H1 (cell line): ENCODE measurements at regions of chr9 and their contacts with region 1.

Region 1: DNA sequence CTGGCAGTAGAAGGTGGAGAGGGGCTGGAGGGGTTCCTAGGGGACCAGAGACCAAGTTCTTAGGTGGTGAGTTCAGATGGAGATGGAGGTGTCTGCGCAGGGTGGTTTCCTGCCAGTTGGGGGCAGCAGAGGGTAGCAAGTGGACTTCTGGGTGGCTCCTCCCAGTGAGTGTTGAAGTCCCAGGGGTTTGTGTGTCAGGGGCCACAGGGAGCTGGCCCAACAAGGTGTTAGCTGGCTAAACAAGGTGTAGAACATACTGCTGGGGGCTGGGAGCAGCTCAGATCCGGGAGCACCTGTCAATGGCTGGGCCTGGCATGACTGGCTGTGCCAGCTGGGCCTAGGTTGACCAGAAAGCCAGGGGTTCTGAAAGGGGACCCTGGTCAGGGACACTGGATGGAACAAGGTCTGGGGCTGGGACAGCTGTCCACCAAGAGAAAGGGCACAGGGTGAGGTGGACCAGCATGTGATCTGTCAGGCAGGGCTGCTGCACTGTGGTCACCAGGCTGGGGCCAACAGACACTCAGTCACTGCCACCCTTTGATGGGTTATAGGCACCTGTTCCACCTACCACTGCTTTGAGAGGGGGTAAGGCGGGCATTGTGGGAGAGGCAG is 35.6 kb downstream of the DAB2IP start:
- DNase-seq: peak in 1 of 2 experiments; percentile 94
- H3K4me3 ChIP-seq: no peak overlapping the region
- H3K27ac ChIP-seq: no peak overlapping the region
- H3K4me1 ChIP-seq: peaks cover 2 to 6% (median 4%) of the 10 kb centered on the region in 4 experiments
- H3K27me3 ChIP-seq: no peaks in the 10 kb centered on the region; a peak in 1 of 7 replicates
- CTCF ChIP-seq: peak; percentile 89 to 95 (median 90)
- EP300 ChIP-seq: no peak
- POLR2A ChIP-seq: no peak
- RAD21 ChIP-seq: peak; percentile 87 to 90

Region 2: GRCh38 chr9:121609845-121610570 is 77.0 kb before region 1 on chr9:
- CTCF ChIA-PET with region 1: interaction called, 11 read pairs
- POLR2A ChIA-PET with region 1: no interaction called
- DNase-seq: no peak
- H3K4me3 ChIP-seq: no peak overlapping the region
- H3K27ac ChIP-seq: no peak overlapping the region
- H3K4me1 ChIP-seq: peaks cover 0 to 10% (median 5%) of the 10 kb centered on the region in 4 experiments; a peak in 5 of 7 replicates
- H3K27me3 ChIP-seq: no peaks in the 10 kb centered on the region
- CTCF ChIP-seq: no peak
- EP300 ChIP-seq: no peak
- POLR2A ChIP-seq: no peak
- RAD21 ChIP-seq: no peak

Region 3: GRCh38 chr9:121658166-121658565 is 28.9 kb before region 1 on chr9:
- CTCF ChIA-PET with region 1: interaction called, 56 read pairs
- POLR2A ChIA-PET with region 1: no interaction called
- DNase-seq: no peak
- H3K4me3 ChIP-seq: no peak overlapping the region
- H3K27ac ChIP-seq: no peak overlapping the region
- H3K4me1 ChIP-seq: peaks cover 0 to 15% (median 7%) of the 10 kb centered on the region in 4 experiments; a peak in 6 of 7 replicates
- H3K27me3 ChIP-seq: no peaks in the 10 kb centered on the region
- CTCF ChIP-seq: no peak
- EP300 ChIP-seq: no peak
- POLR2A ChIP-seq: no peak
- RAD21 ChIP-seq: no peak

Region 4: GRCh38 chr9:121698627-121699570 is 11.9 kb after region 1 on chr9:
- CTCF ChIA-PET with region 1: interaction called, 231 read pairs
- POLR2A ChIA-PET with region 1: interaction called, 3 read pairs
- DNase-seq: peak in 1 of 2 experiments; percentile 86
- H3K4me3 ChIP-seq: peak overlapping the region; percentile 54 to 68 (median 61)
- H3K27ac ChIP-seq: no peak overlapping the region
- H3K4me1 ChIP-seq: peaks cover 4 to 13% (median 12%) of the 10 kb centered on the region in 4 experiments
- H3K27me3 ChIP-seq: peaks cover 0 to 5% (median 0%) of the 10 kb centered on the region in 4 experiments; a peak in 4 of 7 replicates
- CTCF ChIP-seq: no peak
- EP300 ChIP-seq: no peak
- POLR2A ChIP-seq: no peak
- RAD21 ChIP-seq: no peak

Region 5: DNA sequence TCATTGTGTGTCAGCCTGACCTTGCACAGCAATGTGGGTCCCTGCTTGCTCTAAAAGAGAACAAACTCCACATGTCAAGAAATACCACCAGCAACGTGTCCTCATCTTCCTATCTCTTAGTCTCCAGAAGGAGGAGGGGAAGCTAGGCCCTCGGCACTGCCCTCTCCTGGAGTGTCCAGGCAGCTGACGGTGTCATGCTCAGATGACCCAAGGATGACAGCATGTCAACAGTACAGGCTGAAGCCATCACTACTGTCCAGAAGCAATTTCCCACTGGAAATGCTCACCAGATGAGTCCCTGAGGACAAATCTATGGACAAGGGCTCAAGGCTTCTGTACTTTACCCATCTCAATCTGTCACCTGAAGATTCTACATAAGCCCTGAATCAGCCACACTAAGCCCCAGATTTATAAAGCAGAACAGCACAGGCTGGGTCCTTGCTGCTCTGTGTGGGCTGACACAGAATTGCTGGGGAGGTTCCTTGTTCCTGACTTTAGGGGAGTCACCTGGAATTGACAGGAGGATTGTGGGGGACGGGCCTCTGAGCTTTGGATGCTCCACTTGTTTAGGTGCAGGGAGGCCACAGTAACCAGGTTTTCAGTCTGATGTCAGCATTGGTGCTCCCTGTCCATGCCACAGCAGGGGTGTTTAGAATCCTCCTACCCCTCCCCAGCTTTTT is 174.6 kb after region 1 on chr9:
- CTCF ChIA-PET with region 1: interaction called, 20 read pairs
- POLR2A ChIA-PET with region 1: no interaction called
- DNase-seq: peak in 1 of 2 experiments; percentile 57
- H3K4me3 ChIP-seq: no peak overlapping the region
- H3K27ac ChIP-seq: no peak overlapping the region
- H3K4me1 ChIP-seq: peaks cover 0 to 8% (median 2%) of the 10 kb centered on the region in 4 experiments; a peak in 6 of 7 replicates
- H3K27me3 ChIP-seq: no peaks in the 10 kb centered on the region
- CTCF ChIP-seq: peak; percentile 81 to 91 (median 91)
- EP300 ChIP-seq: no peak
- POLR2A ChIP-seq: no peak
- RAD21 ChIP-seq: peak; percentile 64 to 77